ENCODE measurements at regions of chr10 and their contacts with region 1.

Region 1: DNA sequence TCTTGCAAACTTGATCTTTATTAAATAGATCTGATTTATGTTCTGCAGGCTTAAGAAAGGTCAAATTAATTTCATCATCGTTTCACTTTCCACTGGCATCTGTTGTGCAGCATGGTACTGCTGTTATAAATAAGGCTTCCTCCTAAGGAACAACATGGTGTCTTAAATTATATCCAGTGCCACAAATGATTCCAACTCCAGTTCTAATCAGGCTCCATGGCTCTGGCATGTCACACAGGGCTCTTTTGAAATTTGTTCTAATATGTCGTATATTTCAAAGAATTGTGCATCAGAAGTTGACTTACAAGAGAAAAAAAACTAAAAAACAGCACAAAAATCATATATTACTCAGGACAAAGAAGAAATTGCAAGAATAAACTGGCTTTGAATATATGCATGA is 1090.8 kb upstream of the CELF2 start:
- DNase-seq: no peak
- H3K4me3 Mint-ChIP-seq: no peak overlapping the region
- H3K27ac Mint-ChIP-seq: no peak overlapping the region
- H3K4me1 Mint-ChIP-seq: no peaks in the 10 kb centered on the region
- H3K27me3 Mint-ChIP-seq: peaks cover 9% of the 10 kb centered on the region

Region 2: DNA sequence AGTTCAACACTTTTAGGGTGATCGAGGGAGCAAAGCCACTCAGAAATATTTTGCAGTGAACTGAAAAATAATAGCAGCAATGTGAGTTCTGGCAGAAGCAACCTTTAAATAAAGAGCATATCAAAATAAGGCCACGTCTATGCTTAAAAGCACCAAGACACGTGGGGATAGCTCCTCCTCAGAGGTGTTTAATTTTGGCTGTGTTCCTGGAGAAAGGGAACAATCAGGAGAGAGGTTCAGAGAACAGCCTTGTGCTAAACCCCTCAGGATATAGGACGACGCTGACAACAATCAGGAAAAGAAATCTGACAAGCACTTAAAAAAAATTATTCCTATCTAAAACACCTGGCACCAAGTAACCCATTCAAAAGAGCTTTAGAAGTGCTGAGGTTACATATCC is 618.9 kb after region 1 on chr10:
- CTCF ChIA-PET with region 1: no interaction called
- intact Hi-C with region 1: loop called (anchors 5 kb)
- DNase-seq: no peak
- H3K4me3 Mint-ChIP-seq: no peak overlapping the region
- H3K27ac Mint-ChIP-seq: no peak overlapping the region
- H3K4me1 Mint-ChIP-seq: peaks cover 3% of the 10 kb centered on the region
- H3K27me3 Mint-ChIP-seq: peaks cover 4% of the 10 kb centered on the region